ENCODE measurements at regions of chr3 and their contacts with region 1.

Region 1: GRCh38 chr3:148075763-148076716 is 621.7 kb upstream of the AGTR1 start:
- DNase-seq: peak; percentile 77
- H3K4me3 ChIP-seq: no peak overlapping the region
- H3K27ac ChIP-seq: no peak overlapping the region
- H3K4me1 ChIP-seq: peaks cover 16% of the 10 kb centered on the region
- H3K27me3 ChIP-seq: no peaks in the 10 kb centered on the region

Region 2: DNA sequence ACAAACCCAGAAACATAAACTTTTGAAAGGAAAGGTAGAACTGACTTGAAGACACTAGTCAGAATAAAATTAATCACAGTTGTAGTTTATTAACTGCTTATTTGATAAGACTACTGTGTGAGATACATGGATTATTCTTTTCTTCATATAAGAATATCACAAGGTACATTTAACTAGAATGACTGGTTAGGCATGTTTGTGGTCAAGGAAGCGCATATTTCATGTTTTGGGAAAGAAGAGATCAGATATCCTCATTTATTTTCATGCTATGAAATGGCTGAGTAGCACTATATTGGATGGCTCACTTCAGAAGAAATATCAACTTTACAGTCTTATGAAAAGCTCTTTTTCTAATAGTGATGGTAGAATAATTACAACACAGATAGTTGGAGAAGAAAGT is 1248.6 kb before region 1 on chr3:
- in situ Hi-C with region 1: loop called (anchors 10 kb)
- DNase-seq: no peak
- H3K4me3 ChIP-seq: no peak overlapping the region
- H3K27ac ChIP-seq: no peak overlapping the region
- H3K4me1 ChIP-seq: peaks cover 11% of the 10 kb centered on the region; the same call in 1 of the 2 replicates
- H3K27me3 ChIP-seq: no peaks in the 10 kb centered on the region